Endothelial cell of umbilical vein (primary cell): ENCODE measurements at regions of chr10 and their contacts with region 1.

Region 1: GRCh38 chr10:3785257-3785850 is 345 bp upstream of the KLF6 start:
- DNase-seq: peak; percentile 98
- H3K4me3 ChIP-seq: peak overlapping the region; percentile 22 to 95 (median 44)
- H3K27ac ChIP-seq: peak overlapping the region; percentile 98
- H3K4me1 ChIP-seq: peaks cover 26% of the 10 kb centered on the region
- H3K27me3 ChIP-seq: no peaks in the 10 kb centered on the region
- CTCF ChIP-seq: no peak
- POLR2A ChIP-seq: peak; percentile 99

Region 2: DNA sequence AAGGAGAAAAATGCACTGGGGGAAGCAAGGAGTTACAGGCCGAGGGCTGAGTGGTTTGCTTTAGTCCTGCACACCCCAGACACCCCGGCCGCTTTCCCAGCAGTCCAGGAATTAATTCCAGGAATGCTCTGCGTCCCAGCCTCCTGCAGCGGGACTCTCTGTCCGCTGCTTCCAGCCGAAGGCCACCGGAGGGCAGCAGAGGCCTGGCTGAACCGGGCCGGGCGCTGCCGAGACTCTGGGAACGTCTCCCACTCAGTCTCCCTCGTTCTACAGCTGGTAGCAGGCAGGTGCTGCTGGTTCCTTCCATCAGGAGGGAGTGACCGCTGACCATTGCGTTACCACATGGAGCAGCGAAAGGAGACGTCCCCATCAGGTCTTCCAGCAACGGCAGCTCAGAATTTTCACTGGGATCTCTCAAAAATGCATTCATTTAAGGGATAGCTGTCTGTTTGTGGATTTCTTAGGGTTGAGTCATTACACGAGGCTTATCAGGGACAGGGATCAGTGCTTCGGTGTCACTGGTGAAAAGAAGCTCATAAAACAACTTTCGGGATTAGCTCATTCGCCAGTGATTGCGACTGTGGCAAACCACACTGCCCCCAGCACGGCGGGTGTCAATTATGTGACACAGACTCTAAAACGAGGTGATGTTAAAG is 587.9 kb before region 1 on chr10:
- CTCF ChIA-PET with region 1: interaction called, 12 read pairs
- POLR2A ChIA-PET with region 1: interaction called, 5 read pairs
- dilution Hi-C with region 1: no loop called
- intact Hi-C with region 1: no loop called
- DNase-seq: peak; percentile 86
- H3K4me3 ChIP-seq: peak overlapping the region in 2 of 3 experiments; percentile 1 to 6
- H3K27ac ChIP-seq: no peak overlapping the region
- H3K4me1 ChIP-seq: peaks cover 12% of the 10 kb centered on the region
- H3K27me3 ChIP-seq: peaks cover 0 to 6% of the 10 kb centered on the region in 2 experiments
- CTCF ChIP-seq: peak; percentile 93 to 96
- POLR2A ChIP-seq: no peak

Region 3: GRCh38 chr10:3811291-3811870 is 26.0 kb after region 1 on chr10:
- CTCF ChIA-PET with region 1: interaction called, 5 read pairs
- POLR2A ChIA-PET with region 1: interaction called, 26 read pairs
- dilution Hi-C with region 1: no loop called
- intact Hi-C with region 1: no loop called
- DNase-seq: peak; percentile 70
- H3K4me3 ChIP-seq: no peak overlapping the region
- H3K27ac ChIP-seq: peak overlapping the region; percentile 100
- H3K4me1 ChIP-seq: peaks cover 55% of the 10 kb centered on the region
- H3K27me3 ChIP-seq: no peaks in the 10 kb centered on the region
- CTCF ChIP-seq: no peak
- POLR2A ChIP-seq: peak; percentile 28

Region 4: GRCh38 chr10:3887885-3888476 is 102.6 kb after region 1 on chr10:
- CTCF ChIA-PET with region 1: interaction called, 3 read pairs
- POLR2A ChIA-PET with region 1: interaction called, 31 read pairs
- dilution Hi-C with region 1: no loop called
- intact Hi-C with region 1: loop called (anchors 1 kb)
- DNase-seq: peak; percentile 97
- H3K4me3 ChIP-seq: peak overlapping the region in 1 of 3 experiments; percentile 22
- H3K27ac ChIP-seq: peak overlapping the region; percentile 100
- H3K4me1 ChIP-seq: peaks cover 56% of the 10 kb centered on the region
- H3K27me3 ChIP-seq: no peaks in the 10 kb centered on the region
- CTCF ChIP-seq: no peak
- POLR2A ChIP-seq: peak; percentile 65

Region 5: GRCh38 chr10:4043897-4044665 is 258.7 kb after region 1 on chr10:
- CTCF ChIA-PET with region 1: no interaction called
- POLR2A ChIA-PET with region 1: no interaction called
- dilution Hi-C with region 1: no loop called
- intact Hi-C with region 1: loop called (anchors 1 kb)
- DNase-seq: peak; percentile 97
- H3K4me3 ChIP-seq: no peak overlapping the region
- H3K27ac ChIP-seq: peak overlapping the region; percentile 66
- H3K4me1 ChIP-seq: peaks cover 21% of the 10 kb centered on the region
- H3K27me3 ChIP-seq: no peaks in the 10 kb centered on the region
- CTCF ChIP-seq: no peak
- POLR2A ChIP-seq: peak; percentile 67

Region 6: DNA sequence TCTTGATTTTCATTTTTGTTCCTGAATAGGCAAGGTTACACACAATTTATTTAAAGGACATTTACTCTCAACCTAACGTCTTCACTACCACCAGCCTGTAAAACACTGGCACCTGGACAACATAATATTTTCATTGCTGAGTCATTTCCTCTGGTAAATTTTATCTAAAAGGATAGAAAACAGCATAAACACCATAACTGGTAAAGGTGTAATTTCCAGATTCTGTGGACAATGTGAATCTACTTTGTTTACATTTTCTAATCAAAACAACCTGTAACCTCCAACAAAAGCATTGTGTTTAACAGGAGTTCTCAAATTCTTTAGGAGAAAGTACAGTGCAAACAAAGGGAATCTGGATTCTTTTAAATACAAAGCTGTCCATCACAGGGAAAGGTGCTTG is 568.6 kb after region 1 on chr10:
- CTCF ChIA-PET with region 1: no interaction called
- POLR2A ChIA-PET with region 1: no interaction called
- dilution Hi-C with region 1: no loop called
- intact Hi-C with region 1: loop called (anchors 2 kb)
- DNase-seq: peak; percentile 96
- H3K4me3 ChIP-seq: no peak overlapping the region
- H3K27ac ChIP-seq: peak overlapping the region; percentile 94
- H3K4me1 ChIP-seq: peaks cover 46% of the 10 kb centered on the region
- H3K27me3 ChIP-seq: no peaks in the 10 kb centered on the region
- CTCF ChIP-seq: no peak
- POLR2A ChIP-seq: no peak

Region 7: DNA sequence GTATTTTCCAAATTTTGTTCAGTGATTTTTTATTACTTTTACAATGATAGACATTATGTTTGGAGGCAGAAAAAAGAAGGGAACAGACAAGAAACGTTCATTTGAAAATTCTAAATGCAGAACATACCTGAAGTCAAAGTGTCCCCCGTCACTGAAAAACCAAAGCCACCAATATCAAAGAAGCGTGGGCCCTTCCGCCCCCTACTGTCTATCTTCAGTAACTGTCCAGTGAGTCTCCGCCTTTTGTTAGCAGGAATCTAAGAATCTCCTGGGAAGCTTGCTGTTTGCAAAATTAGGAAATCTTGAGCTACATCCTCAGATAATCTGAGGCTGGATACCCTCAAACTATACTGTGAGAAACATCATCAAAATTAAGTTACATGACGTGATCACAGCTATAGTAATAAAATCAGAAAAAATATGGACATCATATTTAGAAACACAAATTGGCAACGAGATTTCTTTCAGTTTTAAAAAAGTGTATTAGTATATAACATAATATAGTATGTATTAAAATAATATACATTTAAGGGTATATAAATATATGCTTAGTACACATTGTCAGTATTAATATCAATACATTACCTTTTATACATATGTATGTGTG is 871.3 kb after region 1 on chr10:
- CTCF ChIA-PET with region 1: interaction called, 9 read pairs
- POLR2A ChIA-PET with region 1: interaction called, 4 read pairs
- dilution Hi-C with region 1: no loop called
- intact Hi-C with region 1: loop called (anchors 2 kb)
- DNase-seq: peak; percentile 80
- H3K4me3 ChIP-seq: no peak overlapping the region
- H3K27ac ChIP-seq: peak overlapping the region; percentile 47
- H3K4me1 ChIP-seq: peaks cover 4% of the 10 kb centered on the region
- H3K27me3 ChIP-seq: no peaks in the 10 kb centered on the region
- CTCF ChIP-seq: peak; percentile 77 to 82
- POLR2A ChIP-seq: no peak